GM13976 (cell line): ENCODE measurements at regions of chr22 and their contacts with region 1.

Region 1: DNA sequence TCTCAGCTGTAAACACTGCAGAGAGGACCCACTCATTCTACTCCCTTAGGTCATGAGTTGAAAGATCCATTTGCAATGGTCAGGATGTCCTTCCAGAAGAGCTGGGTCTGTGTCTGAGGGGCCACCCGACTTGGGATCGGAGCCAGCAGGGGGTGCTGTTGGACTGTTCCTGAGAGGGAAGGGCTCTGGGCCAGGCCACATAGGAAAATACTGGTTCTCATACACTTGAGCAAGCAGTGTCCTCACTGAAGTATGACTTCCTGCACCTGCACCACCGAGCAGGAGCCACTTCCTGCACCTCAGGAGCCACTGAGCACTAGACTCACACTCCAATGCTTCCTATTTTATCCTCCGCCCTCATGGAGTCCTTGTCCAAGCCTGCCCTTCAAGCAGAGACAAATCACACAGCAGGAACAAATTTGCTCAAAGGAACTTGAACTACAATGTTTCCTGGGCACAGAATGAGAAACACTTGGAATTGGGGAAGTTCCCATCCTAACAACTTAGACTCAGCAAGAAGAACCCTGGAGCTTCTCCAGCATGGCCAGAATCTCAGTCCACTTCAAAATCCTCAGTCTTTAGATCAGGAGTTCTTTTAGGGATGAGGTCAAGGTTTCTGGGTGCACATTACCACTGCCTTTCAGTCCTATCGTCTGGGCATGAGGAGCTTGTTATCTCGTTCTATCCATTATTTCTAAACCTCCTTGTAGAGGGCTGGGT is 36.6 kb upstream of the VPREB1 start:
- DNase-seq: peak; percentile 84
- CTCF ChIP-seq: peak; percentile 91

Region 2: GRCh38 chr22:22030493-22031182 is 177.4 kb before region 1 on chr22:
- in situ Hi-C with region 1: loop called (anchors 10 kb)
- DNase-seq: peak; percentile 79
- CTCF ChIP-seq: peak; percentile 93

Region 3: DNA sequence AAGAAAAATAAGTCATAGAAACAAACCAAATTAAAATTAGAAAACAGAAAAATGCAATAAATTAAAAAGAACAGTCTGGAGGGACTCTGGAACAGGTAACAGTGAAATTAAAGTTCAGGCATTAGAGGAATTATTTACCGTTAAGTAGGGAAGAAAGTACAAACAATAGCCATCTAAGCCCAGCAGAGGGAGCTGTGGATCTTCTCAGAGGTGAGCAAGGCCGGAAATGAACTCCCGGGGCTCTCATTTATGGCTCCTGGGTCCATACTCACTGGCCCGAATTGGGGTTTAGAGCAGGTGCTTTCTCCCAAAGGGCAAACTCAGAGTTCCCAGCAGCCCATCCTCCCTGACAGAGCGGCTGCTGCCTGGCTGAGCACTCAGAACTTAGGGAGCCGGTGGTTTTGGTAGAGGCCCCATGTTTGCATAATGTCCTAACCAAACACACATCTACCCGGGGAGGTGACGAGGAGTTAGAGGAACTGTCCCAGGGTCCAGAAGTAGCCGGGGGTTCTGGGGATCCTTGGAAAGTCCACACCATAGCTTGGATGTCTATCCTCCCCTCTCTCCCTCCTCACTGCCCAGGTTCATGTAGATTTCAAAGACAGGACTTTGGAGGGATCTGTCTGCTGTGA is 51.2 kb before region 1 on chr22:
- in situ Hi-C with region 1: loop called (anchors 10 kb)
- DNase-seq: peak; percentile 85
- CTCF ChIP-seq: peak; percentile 77

Region 4: DNA sequence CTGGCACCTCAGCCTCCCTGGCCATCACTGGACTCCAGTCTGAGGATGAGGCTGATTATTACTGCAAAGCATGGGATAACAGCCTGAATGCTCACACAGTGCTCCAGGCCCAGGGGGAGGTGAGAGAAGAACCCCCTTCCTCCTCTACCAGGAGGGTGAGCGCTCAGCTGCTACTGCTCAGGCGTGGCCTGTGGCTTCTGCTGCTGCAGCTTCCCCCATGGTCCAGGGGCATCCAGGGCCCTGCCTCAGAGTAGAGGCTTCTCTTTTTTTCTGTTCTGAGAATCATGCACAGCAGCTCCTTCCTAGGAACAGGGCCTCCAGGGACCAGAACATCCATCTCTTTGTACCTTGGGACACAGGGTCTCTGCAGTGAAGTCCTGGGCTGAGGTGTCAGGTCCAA is 119.7 kb after region 1 on chr22:
- in situ Hi-C with region 1: loop called (anchors 10 kb)
- DNase-seq: no peak
- CTCF ChIP-seq: no peak

Region 5: DNA sequence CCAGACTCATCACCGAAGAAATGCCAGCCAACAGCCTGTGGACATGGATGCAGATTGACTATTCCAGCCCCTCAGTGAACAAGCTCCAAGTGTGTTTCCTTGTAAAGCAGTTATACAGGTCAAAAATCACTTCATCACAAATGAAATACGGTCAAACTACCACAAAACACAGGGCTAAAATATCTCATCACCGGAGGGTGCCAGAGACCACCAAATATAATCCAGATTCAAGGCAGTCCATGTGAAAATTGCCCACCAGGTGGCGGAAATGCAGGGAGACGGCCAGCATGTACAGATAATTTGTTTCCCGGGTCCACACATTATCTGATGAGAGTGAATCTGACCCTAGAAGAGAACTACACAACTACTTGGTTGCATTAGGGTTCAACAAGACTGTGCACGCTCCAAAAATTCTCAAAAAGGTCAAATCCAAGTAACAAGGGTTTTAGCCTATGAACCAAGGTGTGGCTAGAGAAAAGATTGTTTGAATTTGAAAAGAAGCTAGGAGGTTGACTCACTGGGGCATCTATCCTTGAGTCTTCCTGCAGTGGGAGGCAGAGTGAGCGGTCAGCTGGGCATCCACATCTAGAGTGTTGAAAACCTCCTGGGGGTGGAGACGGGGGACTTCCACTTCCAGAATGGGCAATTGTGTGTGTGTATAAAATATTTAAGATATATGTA is 751.3 kb after region 1 on chr22:
- in situ Hi-C with region 1: loop called (anchors 10 kb)
- DNase-seq: peak; percentile 51
- CTCF ChIP-seq: peak; percentile 85